ENCODE measurements at regions of chr4 and their contacts with region 1.

Region 1: GRCh38 chr4:165131247-165131832 is 18.7 kb upstream of the TMEM192 start:
- DNase-seq: peak; percentile 63 to 85 (median 75)
- ATAC-seq: peak; percentile 97
- H3K4me3 ChIP-seq: no peak overlapping the region
- H3K4me3 Mint-ChIP-seq: no peak overlapping the region
- H3K27ac ChIP-seq: no peak overlapping the region
- H3K27ac Mint-ChIP-seq: no peak overlapping the region
- H3K4me1 ChIP-seq: no peaks in the 10 kb centered on the region
- H3K4me1 Mint-ChIP-seq: peaks cover 2% of the 10 kb centered on the region
- H3K27me3 ChIP-seq: no peaks in the 10 kb centered on the region
- H3K27me3 Mint-ChIP-seq: peaks cover 11% of the 10 kb centered on the region
- CTCF ChIP-seq: peak; percentile 92

Region 2: DNA sequence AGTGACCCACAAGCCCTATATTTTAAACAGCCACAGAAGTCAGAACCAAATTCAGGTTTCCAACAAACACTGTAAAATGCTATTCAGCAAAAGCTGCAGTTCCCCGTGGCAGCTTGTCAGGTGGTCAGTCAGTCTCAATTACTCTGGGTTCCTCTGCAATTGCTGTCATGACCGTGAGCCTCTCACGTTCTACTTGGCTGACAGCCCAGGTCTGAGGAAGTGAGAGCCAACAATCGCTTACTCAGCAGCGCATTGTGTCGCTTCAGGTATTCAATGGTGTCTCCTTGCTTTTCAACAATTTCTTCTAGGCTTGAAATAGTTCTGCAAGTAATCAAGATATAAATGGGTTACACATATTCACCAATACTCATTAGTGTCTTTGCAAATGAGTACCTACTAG is 51.9 kb before region 1 on chr4:
- CTCF ChIA-PET with region 1: no interaction called
- POLR2A ChIA-PET with region 1: no interaction called
- intact Hi-C with region 1: no loop called
- DNase-seq: no peak
- ATAC-seq: no peak
- H3K4me3 ChIP-seq: no peak overlapping the region
- H3K4me3 Mint-ChIP-seq: no peak overlapping the region
- H3K27ac ChIP-seq: no peak overlapping the region
- H3K27ac Mint-ChIP-seq: no peak overlapping the region
- H3K4me1 ChIP-seq: no peaks in the 10 kb centered on the region
- H3K4me1 Mint-ChIP-seq: no peaks in the 10 kb centered on the region
- H3K27me3 ChIP-seq: no peaks in the 10 kb centered on the region
- H3K27me3 Mint-ChIP-seq: no peaks in the 10 kb centered on the region
- CTCF ChIP-seq: no peak

Region 3: GRCh38 chr4:165112368-165113139 is 18.8 kb before region 1 on chr4 and contains the start of gene TMEM192:
- CTCF ChIA-PET with region 1: interaction called, 16 read pairs
- POLR2A ChIA-PET with region 1: no interaction called
- intact Hi-C with region 1: loop called in 1 of 2 experiments (anchors 2 kb)
- DNase-seq: peak; percentile 85 to 94 (median 91)
- ATAC-seq: peak; percentile 98
- H3K4me3 ChIP-seq: peak within 1 kb of the TSS; percentile 57 to 84
- H3K4me3 Mint-ChIP-seq: peak within 1 kb of the TSS; percentile 90
- H3K27ac ChIP-seq: peak within 1 kb of the TSS; percentile 66 to 73
- H3K27ac Mint-ChIP-seq: peak within 1 kb of the TSS; percentile 95
- H3K4me1 ChIP-seq: peaks cover 15% of the 10 kb centered on the region
- H3K4me1 Mint-ChIP-seq: peaks cover 27% of the 10 kb centered on the region
- H3K27me3 ChIP-seq: no peaks in the 10 kb centered on the region
- H3K27me3 Mint-ChIP-seq: peaks cover 4% of the 10 kb centered on the region
- CTCF ChIP-seq: no peak
- total RNA-seq, gene TMEM192: 5.6 to 5.8 TPM

Region 4: DNA sequence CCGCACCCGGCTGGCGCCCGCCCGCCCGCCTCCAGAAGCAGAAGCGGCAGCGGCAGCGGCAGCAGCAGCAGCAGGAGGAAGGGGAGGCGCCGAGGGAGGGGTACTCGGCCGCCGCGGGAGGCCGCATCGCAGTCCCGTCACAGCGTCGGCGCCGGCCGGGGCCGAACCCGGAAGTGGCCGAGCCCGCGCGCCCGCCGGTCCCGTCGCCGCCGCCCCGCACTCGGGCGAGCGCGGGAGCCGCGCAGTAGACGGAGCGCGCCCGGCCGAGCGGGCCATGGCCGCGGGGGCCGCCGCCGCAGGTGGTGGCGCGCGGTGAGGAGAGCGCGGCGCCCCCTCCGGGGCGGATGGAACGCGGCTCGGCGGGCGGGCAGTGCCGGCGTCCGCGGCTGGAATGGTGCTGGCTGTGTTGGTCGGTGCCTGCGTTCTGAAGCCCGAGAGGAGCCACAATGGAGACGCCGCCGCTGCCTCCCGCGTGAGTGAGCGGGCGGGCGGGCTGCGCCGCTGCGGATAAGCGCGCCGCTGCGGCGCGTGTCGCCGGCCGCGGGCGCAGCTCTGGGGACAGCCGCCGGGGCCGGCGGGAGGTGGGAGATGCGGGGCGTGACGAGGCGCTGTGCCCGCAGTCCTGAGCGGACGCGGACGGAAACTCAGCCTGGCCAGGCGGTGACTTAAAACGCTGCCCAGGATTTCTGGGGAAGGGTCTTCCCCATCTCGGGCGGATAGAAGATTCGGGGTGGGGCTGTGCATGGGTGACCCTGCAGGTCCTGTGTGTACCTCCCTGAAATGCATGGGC is 76.3 kb after region 1 on chr4 and contains the start of gene KLHL2:
- CTCF ChIA-PET with region 1: interaction called, 6 read pairs
- POLR2A ChIA-PET with region 1: no interaction called
- intact Hi-C with region 1: loop called in 1 of 2 experiments (anchors 5 kb)
- DNase-seq: peak; percentile 33 to 83 (median 67)
- ATAC-seq: peak; percentile 74
- H3K4me3 ChIP-seq: peak within 1 kb of the TSS; percentile 83 to 95
- H3K4me3 Mint-ChIP-seq: peak within 1 kb of the TSS; percentile 92
- H3K27ac ChIP-seq: peak within 1 kb of the TSS; percentile 40 to 59
- H3K27ac Mint-ChIP-seq: peak within 1 kb of the TSS; percentile 92
- H3K4me1 ChIP-seq: peaks cover 31% of the 10 kb centered on the region
- H3K4me1 Mint-ChIP-seq: peaks cover 66% of the 10 kb centered on the region
- H3K27me3 ChIP-seq: no peaks in the 10 kb centered on the region
- H3K27me3 Mint-ChIP-seq: no peaks in the 10 kb centered on the region
- CTCF ChIP-seq: no peak
- total RNA-seq, gene KLHL2: 17.5 to 18.4 TPM

Region 5: DNA sequence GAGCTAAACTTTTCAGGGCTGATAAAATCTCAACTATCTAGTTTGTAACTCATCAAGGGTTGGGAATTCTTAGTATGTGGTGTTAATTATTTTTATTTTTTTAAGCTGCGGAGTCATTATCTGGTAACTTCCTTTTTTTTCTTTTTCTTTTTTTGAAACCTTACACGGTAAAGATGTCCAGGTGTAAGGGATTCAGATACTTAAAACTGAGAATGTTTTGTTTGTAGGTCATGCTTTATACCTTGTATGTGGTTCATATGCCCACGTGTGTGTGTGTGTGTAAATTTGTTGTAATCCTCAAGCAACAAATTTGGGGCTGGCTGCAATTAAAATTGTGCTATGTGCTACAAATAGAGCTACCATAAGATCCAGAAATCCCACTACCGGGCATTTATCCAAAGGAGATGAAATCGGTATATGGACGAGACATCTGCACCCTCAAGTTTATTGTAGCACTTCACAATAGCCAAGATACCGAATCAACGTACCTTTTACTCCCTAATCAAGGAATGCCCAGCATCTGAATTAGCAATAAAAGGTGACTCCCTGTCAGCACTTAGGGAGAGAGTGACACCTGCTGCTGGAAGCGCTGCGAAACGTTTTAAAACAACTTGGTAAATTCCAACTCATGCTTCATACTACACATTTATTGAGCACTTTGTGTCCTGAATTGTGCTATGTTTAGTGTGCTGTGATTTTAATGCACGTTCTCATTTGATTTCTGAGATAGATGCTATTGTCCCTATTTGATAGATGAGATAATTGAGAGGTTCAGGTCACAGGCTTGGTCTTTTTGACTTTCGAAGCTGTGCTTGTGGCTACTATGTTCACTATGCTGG is 212.2 kb after region 1 on chr4:
- CTCF ChIA-PET with region 1: interaction called, 40 read pairs
- POLR2A ChIA-PET with region 1: no interaction called
- intact Hi-C with region 1: loop called (anchors 1 to 2 kb)
- DNase-seq: peak in 2 of 9 experiments; percentile 9 to 42
- ATAC-seq: no peak
- H3K4me3 ChIP-seq: no peak overlapping the region
- H3K4me3 Mint-ChIP-seq: no peak overlapping the region
- H3K27ac ChIP-seq: no peak overlapping the region
- H3K27ac Mint-ChIP-seq: no peak overlapping the region
- H3K4me1 ChIP-seq: no peaks in the 10 kb centered on the region
- H3K4me1 Mint-ChIP-seq: no peaks in the 10 kb centered on the region
- H3K27me3 ChIP-seq: no peaks in the 10 kb centered on the region
- H3K27me3 Mint-ChIP-seq: no peaks in the 10 kb centered on the region
- CTCF ChIP-seq: no peak

Region 6: GRCh38 chr4:165464813-165465381 is 333.6 kb after region 1 on chr4:
- CTCF ChIA-PET with region 1: interaction called, 81 read pairs
- POLR2A ChIA-PET with region 1: no interaction called
- intact Hi-C with region 1: loop called (anchors 1 kb)
- DNase-seq: peak in 4 of 9 experiments; percentile 9 to 66 (median 35)
- ATAC-seq: peak; percentile 42
- H3K4me3 ChIP-seq: no peak overlapping the region
- H3K4me3 Mint-ChIP-seq: no peak overlapping the region
- H3K27ac ChIP-seq: no peak overlapping the region
- H3K27ac Mint-ChIP-seq: no peak overlapping the region
- H3K4me1 ChIP-seq: no peaks in the 10 kb centered on the region
- H3K4me1 Mint-ChIP-seq: no peaks in the 10 kb centered on the region
- H3K27me3 ChIP-seq: no peaks in the 10 kb centered on the region
- H3K27me3 Mint-ChIP-seq: peaks cover 3% of the 10 kb centered on the region
- CTCF ChIP-seq: peak; percentile 86